ENCODE measurements at regions of chr12 and their contacts with region 1.

Region 1: GRCh38 chr12:105382771-105383622 is 52.5 kb downstream of the C12orf75 start:
- DNase-seq: peak in 4 of 14 experiments; percentile 30 to 76 (median 70)
- ATAC-seq: peak; percentile 71
- H3K4me3 ChIP-seq: no peak overlapping the region
- H3K4me3 Mint-ChIP-seq: no peak overlapping the region
- H3K27ac ChIP-seq: no peak overlapping the region
- H3K27ac Mint-ChIP-seq: no peak overlapping the region
- H3K4me1 ChIP-seq: no peaks in the 10 kb centered on the region
- H3K4me1 Mint-ChIP-seq: no peaks in the 10 kb centered on the region
- H3K27me3 ChIP-seq: no peaks in the 10 kb centered on the region
- H3K27me3 Mint-ChIP-seq: no peaks in the 10 kb centered on the region
- CTCF ChIP-seq: peak; percentile 84

Region 2: DNA sequence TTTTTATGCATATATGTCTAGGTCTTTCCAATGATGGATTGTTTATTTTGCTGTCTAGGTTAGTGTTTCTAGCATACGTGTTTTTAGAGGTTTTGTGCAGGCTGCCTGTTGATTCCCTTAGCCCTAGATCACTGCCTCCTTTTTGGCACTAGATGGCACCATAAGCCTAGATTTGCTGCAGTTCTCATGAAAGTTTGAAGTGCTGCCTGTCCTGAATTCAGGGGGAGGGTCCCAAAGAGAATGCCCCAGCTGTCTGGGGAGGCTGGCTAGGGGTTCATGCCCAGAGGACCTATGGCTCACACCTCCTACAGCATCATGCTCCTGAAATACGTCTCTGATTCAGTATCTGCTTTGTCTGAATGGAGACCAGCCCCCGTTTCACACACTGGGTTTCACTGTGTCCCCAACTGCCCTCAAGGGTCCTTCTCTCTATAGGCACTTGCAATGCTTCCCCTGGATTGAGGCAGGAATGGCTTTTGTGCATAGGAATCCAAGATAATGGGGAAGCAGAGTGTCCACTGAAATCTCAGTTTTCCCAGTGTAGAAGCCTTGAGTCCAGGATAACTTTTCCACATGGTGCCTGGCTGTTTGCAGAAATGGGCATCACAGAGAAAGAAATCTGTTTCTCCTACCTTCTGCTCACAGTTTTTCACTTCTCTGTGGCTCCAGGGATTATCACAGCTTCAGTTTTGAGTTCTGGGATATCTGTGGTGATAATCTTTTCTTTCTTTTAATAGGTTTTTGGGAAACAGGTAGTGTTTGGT is 1181.6 kb before region 1 on chr12:
- CTCF ChIA-PET with region 1: no interaction called
- POLR2A ChIA-PET with region 1: no interaction called
- intact Hi-C with region 1: loop called (anchors 1 to 2 kb)
- DNase-seq: peak; percentile 16 to 82 (median 34)
- ATAC-seq: peak; percentile 82
- H3K4me3 ChIP-seq: no peak overlapping the region
- H3K4me3 Mint-ChIP-seq: no peak overlapping the region
- H3K27ac ChIP-seq: no peak overlapping the region
- H3K27ac Mint-ChIP-seq: no peak overlapping the region
- H3K4me1 ChIP-seq: no peaks in the 10 kb centered on the region
- H3K4me1 Mint-ChIP-seq: no peaks in the 10 kb centered on the region
- H3K27me3 ChIP-seq: peaks cover 0 to 5% of the 10 kb centered on the region in 2 experiments
- H3K27me3 Mint-ChIP-seq: peaks cover 5% of the 10 kb centered on the region
- CTCF ChIP-seq: peak; percentile 85

Region 3: GRCh38 chr12:105141320-105141918 is 241.6 kb before region 1 on chr12:
- CTCF ChIA-PET with region 1: no interaction called
- POLR2A ChIA-PET with region 1: no interaction called
- intact Hi-C with region 1: loop called in 1 of 2 experiments (anchors 5 kb)
- DNase-seq: no peak
- ATAC-seq: no peak
- H3K4me3 ChIP-seq: no peak overlapping the region
- H3K4me3 Mint-ChIP-seq: no peak overlapping the region
- H3K27ac ChIP-seq: no peak overlapping the region
- H3K27ac Mint-ChIP-seq: no peak overlapping the region
- H3K4me1 ChIP-seq: no peaks in the 10 kb centered on the region
- H3K4me1 Mint-ChIP-seq: peaks cover 15% of the 10 kb centered on the region
- H3K27me3 ChIP-seq: no peaks in the 10 kb centered on the region
- H3K27me3 Mint-ChIP-seq: no peaks in the 10 kb centered on the region
- CTCF ChIP-seq: no peak

Region 4: GRCh38 chr12:105235732-105236476 is 147.1 kb before region 1 on chr12 and contains the start of gene APPL2:
- CTCF ChIA-PET with region 1: no interaction called
- POLR2A ChIA-PET with region 1: interaction called, 7 read pairs
- intact Hi-C with region 1: loop called in 1 of 2 experiments (anchors 5 kb)
- DNase-seq: peak; percentile 55 to 90 (median 80)
- ATAC-seq: peak; percentile 76
- H3K4me3 ChIP-seq: peak within 1 kb of the TSS; percentile 74
- H3K4me3 Mint-ChIP-seq: peak within 1 kb of the TSS; percentile 94
- H3K27ac ChIP-seq: peak within 1 kb of the TSS; percentile 68 to 83
- H3K27ac Mint-ChIP-seq: peak within 1 kb of the TSS; percentile 90
- H3K4me1 ChIP-seq: peaks cover 39% of the 10 kb centered on the region
- H3K4me1 Mint-ChIP-seq: peaks cover 47% of the 10 kb centered on the region
- H3K27me3 ChIP-seq: no peaks in the 10 kb centered on the region
- H3K27me3 Mint-ChIP-seq: no peaks in the 10 kb centered on the region
- CTCF ChIP-seq: peak; percentile 48
- total RNA-seq, gene APPL2: 58.8 to 59.9 TPM

Region 5: DNA sequence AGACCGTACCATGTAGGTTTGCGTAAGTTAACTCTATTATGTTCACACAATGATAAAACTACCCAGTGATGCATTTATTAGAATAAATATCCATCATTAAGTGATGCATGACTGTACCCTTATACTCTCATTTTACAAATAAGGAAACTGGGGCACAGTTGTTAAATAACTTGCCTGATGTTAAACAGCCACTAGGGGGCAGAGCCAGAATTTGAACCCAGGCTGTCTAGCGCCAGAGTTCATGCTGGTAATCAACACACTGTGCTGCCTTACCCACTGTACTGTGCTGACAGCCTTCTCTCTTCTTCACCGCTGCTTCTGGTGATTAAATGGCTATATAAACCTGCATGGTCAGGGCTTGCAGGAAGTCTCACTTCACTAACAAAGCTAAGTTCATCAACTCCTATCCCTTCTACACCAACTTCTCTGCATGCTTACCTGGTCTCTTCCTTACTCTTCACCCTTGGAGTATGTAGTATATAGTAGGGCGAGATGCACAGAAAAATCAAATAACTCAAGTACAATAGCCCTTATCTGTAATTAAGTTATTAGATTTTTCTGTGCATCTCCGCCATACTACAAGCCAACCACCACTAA is 103.4 kb before region 1 on chr12:
- CTCF ChIA-PET with region 1: interaction called, 3 read pairs
- POLR2A ChIA-PET with region 1: no interaction called
- intact Hi-C with region 1: loop called (anchors 1 kb)
- DNase-seq: peak in 12 of 14 experiments; percentile 5 to 63 (median 20)
- ATAC-seq: peak; percentile 39
- H3K4me3 ChIP-seq: no peak overlapping the region
- H3K4me3 Mint-ChIP-seq: no peak overlapping the region
- H3K27ac ChIP-seq: no peak overlapping the region
- H3K27ac Mint-ChIP-seq: no peak overlapping the region
- H3K4me1 ChIP-seq: no peaks in the 10 kb centered on the region
- H3K4me1 Mint-ChIP-seq: no peaks in the 10 kb centered on the region
- H3K27me3 ChIP-seq: no peaks in the 10 kb centered on the region
- H3K27me3 Mint-ChIP-seq: peaks cover 19% of the 10 kb centered on the region
- CTCF ChIP-seq: peak; percentile 69

Region 6: DNA sequence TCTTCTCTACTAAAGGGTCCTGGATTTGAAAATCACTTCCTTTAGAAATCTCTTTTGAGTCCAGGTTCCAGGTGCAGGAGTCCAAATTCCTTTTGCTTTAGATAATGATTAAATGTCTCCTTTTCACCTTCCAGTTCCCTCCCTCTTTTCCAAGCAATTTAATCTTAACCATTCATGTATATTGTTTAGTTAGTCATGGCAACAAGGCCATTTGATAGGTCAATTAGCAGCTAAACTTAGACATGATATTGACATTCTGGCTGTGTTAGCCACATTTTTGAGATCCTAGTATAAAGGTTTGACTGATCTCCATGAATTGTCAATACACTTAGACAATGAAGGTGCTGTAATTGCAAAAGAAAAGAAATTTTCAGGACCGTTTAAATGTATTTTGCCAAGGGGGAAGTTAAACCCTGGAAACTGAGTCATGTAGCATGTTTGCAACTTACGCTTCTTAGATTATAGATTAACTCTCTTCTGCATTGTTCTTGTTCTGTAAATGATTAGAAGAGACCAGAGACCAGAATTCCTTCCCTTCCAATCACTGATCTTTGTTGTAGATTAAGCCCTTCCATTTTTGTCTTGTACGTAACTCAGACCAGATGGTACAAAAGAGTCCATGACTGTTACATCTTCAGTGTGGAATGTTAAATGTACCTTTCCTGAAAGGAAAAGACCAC is 64.9 kb before region 1 on chr12:
- CTCF ChIA-PET with region 1: interaction called, 4 read pairs
- POLR2A ChIA-PET with region 1: no interaction called
- intact Hi-C with region 1: loop called (anchors 1 to 2 kb)
- DNase-seq: no peak
- ATAC-seq: no peak
- H3K4me3 ChIP-seq: no peak overlapping the region
- H3K4me3 Mint-ChIP-seq: no peak overlapping the region
- H3K27ac ChIP-seq: no peak overlapping the region
- H3K27ac Mint-ChIP-seq: no peak overlapping the region
- H3K4me1 ChIP-seq: peaks cover 11% of the 10 kb centered on the region
- H3K4me1 Mint-ChIP-seq: peaks cover 19% of the 10 kb centered on the region
- H3K27me3 ChIP-seq: no peaks in the 10 kb centered on the region
- H3K27me3 Mint-ChIP-seq: no peaks in the 10 kb centered on the region
- CTCF ChIP-seq: no peak

Region 7: DNA sequence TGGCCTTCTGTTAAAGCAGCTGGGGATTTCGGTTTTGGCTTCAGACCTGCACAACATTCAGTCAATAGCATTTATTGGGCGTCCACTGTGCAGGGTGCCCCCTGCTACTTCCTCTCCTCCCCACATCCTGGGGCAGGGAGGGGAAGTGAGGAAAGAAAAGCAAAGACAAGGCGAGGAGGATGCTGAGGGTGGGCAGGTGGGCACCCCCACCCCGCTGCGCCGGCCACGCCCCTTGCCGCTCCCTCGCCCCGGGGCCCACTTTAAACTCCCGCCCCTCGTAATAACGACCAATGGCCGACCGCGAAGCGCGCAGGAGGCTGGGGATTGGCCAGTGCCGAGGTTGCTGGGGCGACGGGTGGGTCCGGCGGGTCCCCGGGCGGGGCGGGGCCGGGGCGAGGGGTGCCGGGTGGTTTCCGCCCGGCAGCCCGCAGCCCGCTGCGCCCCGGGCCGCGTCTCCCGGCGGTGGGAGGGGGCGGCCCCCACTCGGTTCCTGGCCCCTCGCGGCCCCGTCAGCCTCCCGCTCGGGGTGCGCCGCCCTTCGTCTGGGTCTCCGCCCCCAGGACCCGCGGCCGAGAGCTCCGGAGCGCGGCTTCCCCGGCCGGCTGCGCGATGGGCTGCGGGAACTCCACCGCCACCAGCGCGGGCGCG is 52.6 kb before region 1 on chr12 and contains the start of gene C12orf75:
- CTCF ChIA-PET with region 1: no interaction called
- POLR2A ChIA-PET with region 1: no interaction called
- intact Hi-C with region 1: no loop called
- DNase-seq: peak; percentile 60 to 93 (median 79)
- ATAC-seq: peak; percentile 82
- H3K4me3 ChIP-seq: peak within 1 kb of the TSS; percentile 72
- H3K4me3 Mint-ChIP-seq: peak within 1 kb of the TSS; percentile 87
- H3K27ac ChIP-seq: peak within 1 kb of the TSS; percentile 32 to 63
- H3K27ac Mint-ChIP-seq: peak within 1 kb of the TSS; percentile 87
- H3K4me1 ChIP-seq: peaks cover 30% of the 10 kb centered on the region
- H3K4me1 Mint-ChIP-seq: peaks cover 55% of the 10 kb centered on the region
- H3K27me3 ChIP-seq: no peaks in the 10 kb centered on the region
- H3K27me3 Mint-ChIP-seq: no peaks in the 10 kb centered on the region
- CTCF ChIP-seq: no peak
- total RNA-seq, gene C12orf75: 16.7 to 17.0 TPM